SK-N-SH (cell line): ENCODE measurements at regions of chr12 and their contacts with region 1.

Region 1: DNA sequence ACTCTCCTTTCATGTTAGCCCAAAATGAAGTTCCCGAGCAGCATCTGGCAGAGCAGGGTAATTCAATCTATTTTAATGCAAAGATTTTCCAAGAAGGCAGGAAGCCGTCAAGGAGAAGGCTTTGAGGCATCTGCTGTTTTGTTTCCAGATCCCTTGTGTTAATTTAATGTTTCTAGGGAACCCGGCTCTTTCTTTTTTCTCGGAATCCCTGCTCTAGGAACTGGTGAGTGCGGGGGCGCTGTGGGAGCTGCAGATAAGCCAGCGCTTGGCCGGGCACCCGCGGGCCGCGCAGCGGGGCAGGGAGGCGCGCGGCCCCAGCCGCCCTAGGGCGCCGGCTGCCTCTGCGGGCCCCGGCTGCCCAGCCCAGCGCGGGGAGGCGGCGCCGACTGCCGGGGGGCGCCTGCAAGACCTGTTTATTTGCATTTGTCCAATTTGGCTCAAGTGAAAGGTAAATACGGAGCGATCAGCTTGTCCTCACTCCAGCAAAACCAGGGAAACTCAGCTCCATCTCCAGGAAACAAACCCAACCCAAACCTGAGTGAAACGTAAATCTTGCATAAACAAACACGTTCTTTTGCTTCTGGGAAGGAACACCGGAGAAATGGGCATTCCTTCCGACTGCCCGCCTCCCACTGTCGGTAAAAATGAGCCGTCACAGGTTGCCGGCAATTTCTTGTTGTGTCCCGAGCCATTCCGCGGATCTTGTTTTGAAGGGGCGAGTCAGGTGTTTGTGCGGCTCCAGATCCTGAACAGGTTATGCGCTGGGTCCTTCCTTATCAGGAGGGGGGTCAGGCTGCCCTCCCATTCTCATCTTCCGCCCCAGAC is 65.1 kb downstream of the CRADD start:
- DNase-seq: peak; percentile 93
- H3K4me3 ChIP-seq: peak overlapping the region; percentile 68 to 73
- H3K27ac ChIP-seq: peak overlapping the region; percentile 90 to 97
- H3K4me1 ChIP-seq: peaks cover 6 to 9% of the 10 kb centered on the region in 2 experiments; a peak in 2 of 4 replicates
- H3K27me3 ChIP-seq: no peaks in the 10 kb centered on the region
- CTCF ChIP-seq: peak; percentile 50
- EP300 ChIP-seq: 0 out of 4 replicates have a peak, but pooled peaks of 1 of the 2 experiments have one; percentile 6
- RAD21 ChIP-seq: peak; percentile 47

Region 2: DNA sequence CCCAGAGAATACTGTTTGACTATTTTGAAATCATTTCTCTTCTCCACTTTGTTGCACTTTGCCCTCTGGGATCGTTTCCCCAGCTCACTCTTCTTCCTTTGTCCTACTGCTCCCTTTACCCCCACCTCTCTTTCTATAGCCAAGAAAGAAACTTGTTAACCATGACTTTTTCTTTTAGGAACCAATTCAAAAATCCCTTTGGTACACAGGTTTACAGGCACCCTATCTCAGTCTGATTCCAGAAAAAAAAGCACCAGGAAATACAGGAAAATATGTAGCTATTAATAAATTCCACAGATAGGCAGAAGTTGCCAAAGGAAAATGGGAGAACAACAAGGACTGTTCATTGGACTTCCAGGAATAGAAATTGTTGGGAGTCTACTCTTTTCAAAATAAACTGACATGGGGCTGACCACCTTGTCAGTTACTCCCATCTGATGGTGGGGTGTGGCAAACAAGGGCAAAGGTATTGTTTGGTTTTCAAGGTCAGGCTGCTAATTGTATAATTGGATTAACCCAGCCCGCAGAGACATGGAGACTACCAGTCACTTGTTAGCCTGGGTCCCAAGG is 17.3 kb after region 1 on chr12:
- CTCF ChIA-PET with region 1: interaction called, 13 read pairs
- POLR2A ChIA-PET with region 1: no interaction called
- DNase-seq: no peak
- H3K4me3 ChIP-seq: no peak overlapping the region
- H3K27ac ChIP-seq: no peak overlapping the region
- H3K4me1 ChIP-seq: peaks cover 0 to 5% of the 10 kb centered on the region in 2 experiments; a peak in 2 of 4 replicates
- H3K27me3 ChIP-seq: no peaks in the 10 kb centered on the region
- CTCF ChIP-seq: no peak
- EP300 ChIP-seq: no peak
- RAD21 ChIP-seq: no peak

Region 3: DNA sequence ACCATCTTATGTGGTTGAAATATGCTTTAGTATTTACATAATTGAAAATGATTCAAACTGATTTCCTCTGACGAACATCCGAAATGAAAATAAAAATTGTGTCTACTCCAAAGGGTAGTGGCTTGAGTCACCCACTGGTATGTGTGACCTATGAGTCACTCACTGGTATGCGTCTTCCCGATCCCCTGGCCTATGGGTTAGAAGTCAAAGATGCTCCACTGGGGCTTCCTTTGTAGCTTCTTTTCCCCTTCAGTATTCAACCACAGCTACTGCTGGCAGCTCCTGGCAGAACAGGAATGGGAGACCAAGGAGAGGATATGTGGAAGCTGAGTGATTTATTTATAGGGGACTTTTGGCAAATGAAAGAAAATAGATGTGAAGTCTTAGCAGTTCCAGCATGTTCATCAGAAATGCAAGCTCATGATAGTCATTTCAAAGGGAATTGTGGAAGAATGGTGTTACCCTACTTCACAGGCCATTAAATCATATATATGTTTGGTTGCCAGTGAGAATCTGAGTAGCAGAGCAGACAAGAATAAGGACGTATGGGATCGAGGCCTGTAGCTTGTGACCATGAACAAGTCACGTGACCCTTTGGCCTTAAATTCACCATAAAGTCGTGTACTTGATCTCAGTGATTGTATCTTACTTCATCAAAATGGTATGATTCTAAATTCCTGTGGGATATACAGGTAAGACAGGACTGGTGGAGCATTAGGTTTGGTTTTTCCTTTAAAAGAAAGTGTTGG is 43.1 kb after region 1 on chr12:
- CTCF ChIA-PET with region 1: interaction called, 10 read pairs
- POLR2A ChIA-PET with region 1: interaction called, 3 read pairs
- DNase-seq: no peak
- H3K4me3 ChIP-seq: peak overlapping the region in 1 of 2 experiments; percentile 24; a peak in 1 of 4 replicates
- H3K27ac ChIP-seq: peak overlapping the region; percentile 94 to 99
- H3K4me1 ChIP-seq: peaks cover 32 to 46% of the 10 kb centered on the region in 2 experiments
- H3K27me3 ChIP-seq: no peaks in the 10 kb centered on the region
- CTCF ChIP-seq: no peak
- EP300 ChIP-seq: peak in 1 of 2 experiments; percentile 96; a peak in 2 of 4 replicates
- RAD21 ChIP-seq: no peak